Testis (tissue), 5 donors: ENCODE measurements at regions of chr9 and their contacts with region 1.

Region 1: DNA sequence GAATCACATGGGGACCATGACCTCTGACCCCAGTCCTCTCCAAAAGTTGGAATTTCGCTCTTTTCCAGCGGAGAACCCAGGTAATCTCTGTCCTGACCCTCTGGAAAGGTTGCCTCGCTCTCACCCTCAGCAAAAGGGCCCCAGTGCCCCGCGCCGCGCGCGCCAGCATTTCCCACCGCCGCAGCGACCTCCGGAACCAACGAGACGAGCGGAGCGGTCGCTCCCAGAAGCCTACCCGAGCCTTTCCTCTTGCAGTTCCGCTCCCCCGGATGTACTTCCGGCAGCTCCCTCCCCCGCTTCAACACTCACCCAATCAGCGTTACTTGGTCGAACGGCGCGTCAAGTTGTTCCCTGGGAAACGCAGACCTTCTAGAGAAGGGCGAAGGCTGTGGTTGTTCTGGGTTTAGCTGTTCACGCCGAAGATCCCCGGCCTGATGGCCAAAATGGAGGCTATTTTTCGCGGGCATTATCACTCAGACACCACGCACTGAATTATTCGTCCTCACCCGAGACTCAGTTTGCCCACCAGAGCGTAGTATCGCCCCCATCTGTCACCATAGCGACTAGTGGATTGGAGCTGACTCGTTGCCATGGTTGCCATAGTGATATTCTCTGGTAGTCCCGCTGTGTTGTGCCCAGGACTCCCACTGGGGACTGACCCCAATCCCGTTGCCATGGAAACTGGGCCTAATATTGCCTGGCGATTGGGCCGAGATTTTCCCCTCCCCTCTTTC is at the start of gene STOML2:
- DNase-seq: peak; percentile 98
- H3K4me3 ChIP-seq: peak within 1 kb of the TSS; percentile 77 to 78
- H3K27ac ChIP-seq: peak within 1 kb of the TSS; percentile 60 to 90
- H3K4me1 ChIP-seq: peaks cover 12% of the 10 kb centered on the region
- H3K27me3 ChIP-seq: no peaks in the 10 kb centered on the region
- CTCF ChIP-seq: no peak
- POLR2A ChIP-seq: no peak
- total RNA-seq, gene STOML2: 87.1 to 115 TPM

Region 2: GRCh38 chr9:34994260-34994899 is 108.7 kb before region 1 on chr9:
- intact Hi-C with region 1: loop called (anchors 10 kb)
- DNase-seq: peak; percentile 53
- H3K4me3 ChIP-seq: no peak overlapping the region
- H3K27ac ChIP-seq: peak overlapping the region; percentile 83 to 91
- H3K4me1 ChIP-seq: peaks cover 51% of the 10 kb centered on the region
- H3K27me3 ChIP-seq: no peaks in the 10 kb centered on the region
- CTCF ChIP-seq: peak in 2 of 3 experiments; percentile 30 to 43
- POLR2A ChIP-seq: no peak